Right lobe of liver (tissue), 6 donors: ENCODE measurements at regions of chr4 and their contacts with region 1.

Region 1: DNA sequence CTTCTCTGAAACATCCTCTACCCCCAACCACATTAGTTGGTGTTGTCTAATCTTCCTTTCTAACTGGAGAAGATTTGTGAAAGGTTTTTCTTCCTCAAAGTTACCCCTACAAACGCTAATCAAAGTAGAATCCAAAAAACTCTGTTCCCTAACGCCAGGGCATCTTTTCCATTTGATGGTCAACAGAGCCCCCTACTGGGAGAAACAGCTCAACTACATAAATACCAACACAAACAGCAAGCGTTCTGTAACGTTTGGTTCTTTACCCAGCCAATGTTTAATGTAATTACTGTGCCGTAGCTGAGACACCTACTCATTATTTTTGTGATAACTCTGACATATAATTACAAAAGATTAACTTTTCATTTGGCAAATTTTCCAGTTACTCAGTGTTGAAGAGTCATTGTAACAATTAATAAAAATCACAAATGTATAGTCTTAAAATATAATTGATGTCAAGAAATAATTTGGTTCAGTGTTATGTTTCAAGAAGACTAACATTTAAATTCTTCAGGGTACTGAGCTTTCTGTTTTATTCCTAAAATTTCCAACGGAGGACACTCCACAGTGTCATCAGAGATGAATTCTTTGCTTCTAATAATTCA is 94.9 kb upstream of the TBC1D9 start:
- DNase-seq: peak in 1 of 3 donors; percentile 48
- ATAC-seq: peak; percentile 91 to 97 (median 92)
- H3K4me3 ChIP-seq: no peak overlapping the region
- H3K27ac ChIP-seq: no peak overlapping the region
- H3K4me1 ChIP-seq: no peaks in the 10 kb centered on the region
- H3K27me3 ChIP-seq: no peaks in the 10 kb centered on the region
- CTCF ChIP-seq: peak; percentile 78 to 94 (median 82)
- POLR2A ChIP-seq: no peak

Region 2: DNA sequence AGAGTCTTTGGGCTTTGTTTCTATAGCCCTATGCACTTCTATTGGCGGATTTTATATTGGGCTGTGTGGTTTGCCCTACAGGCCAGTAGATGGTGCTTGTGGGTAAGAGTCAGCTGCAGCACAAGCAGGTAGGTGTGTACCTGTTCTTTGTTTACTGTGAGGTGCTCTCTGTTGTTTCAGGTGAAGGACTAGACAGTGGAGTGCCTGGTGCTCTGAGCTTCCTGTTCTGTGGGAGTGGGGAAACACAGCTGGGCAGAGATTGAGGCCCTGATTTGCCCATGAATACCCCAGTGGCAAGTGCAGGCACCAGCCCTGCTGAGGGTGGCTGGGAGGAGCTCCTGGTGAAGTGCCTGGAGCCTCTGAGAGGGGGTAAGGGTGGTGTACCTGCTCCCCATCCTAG is 256.1 kb before region 1 on chr4:
- intact Hi-C with region 1: loop called in 1 of 2 experiments (anchors 10 kb)
- DNase-seq: no peak
- ATAC-seq: peak; percentile 97 to 99 (median 98)
- H3K4me3 ChIP-seq: no peak overlapping the region
- H3K27ac ChIP-seq: no peak overlapping the region
- H3K4me1 ChIP-seq: peaks cover 0 to 3% (median 0%) of the 10 kb centered on the region in 4 donors
- H3K27me3 ChIP-seq: no peaks in the 10 kb centered on the region
- CTCF ChIP-seq: peak; percentile 59 to 75 (median 70)
- POLR2A ChIP-seq: no peak

Region 3: GRCh38 chr4:140720387-140721304 is 130.5 kb before region 1 on chr4:
- intact Hi-C with region 1: no loop called
- DNase-seq: no peak
- ATAC-seq: peak; percentile 25 to 45 (median 38)
- H3K4me3 ChIP-seq: no peak overlapping the region
- H3K27ac ChIP-seq: peak overlapping the region in 2 of 3 donors; percentile 10 to 44
- H3K4me1 ChIP-seq: peaks cover 0 to 6% (median 0%) of the 10 kb centered on the region in 4 donors
- H3K27me3 ChIP-seq: no peaks in the 10 kb centered on the region
- CTCF ChIP-seq: no peak
- POLR2A ChIP-seq: no peak

Region 4: GRCh38 chr4:140777894-140778293 is 73.2 kb before region 1 on chr4:
- intact Hi-C with region 1: no loop called
- DNase-seq: no peak
- ATAC-seq: no peak
- H3K4me3 ChIP-seq: no peak overlapping the region
- H3K27ac ChIP-seq: no peak overlapping the region
- H3K4me1 ChIP-seq: no peaks in the 10 kb centered on the region
- H3K27me3 ChIP-seq: no peaks in the 10 kb centered on the region
- CTCF ChIP-seq: no peak
- POLR2A ChIP-seq: no peak

Region 5: GRCh38 chr4:141133146-141133998 is 282.2 kb after region 1 on chr4 and contains the start of gene RNF150:
- intact Hi-C with region 1: loop called in 1 of 2 experiments (anchors 10 kb)
- DNase-seq: peak; percentile 61 to 74 (median 66)
- ATAC-seq: peak; percentile 90 to 92 (median 92)
- H3K4me3 ChIP-seq: peak within 1 kb of the TSS; percentile 55 to 72 (median 69)
- H3K27ac ChIP-seq: peak within 1 kb of the TSS in 2 of 3 donors; percentile 23 to 43
- H3K4me1 ChIP-seq: peaks cover 0 to 4% (median 0%) of the 10 kb centered on the region in 4 donors
- H3K27me3 ChIP-seq: peaks cover 0 to 9% of the 10 kb centered on the region in 2 donors
- CTCF ChIP-seq: peak; percentile 55 to 70 (median 62)
- POLR2A ChIP-seq: no peak
- total RNA-seq, gene RNF150: 1.2 to 1.8 (median 1.5) TPM